Activated CD4-positive, alpha-beta T cell treated with anti-CD3 and anti-CD28 coated beads for 36 hours (primary cell): ENCODE measurements at regions of chr15 and their contacts with region 1.

Region 1: GRCh38 chr15:45340429-45340828 is 37.9 kb downstream of the GATM start:
- DNase-seq: no peak
- ATAC-seq: no peak
- H3K4me3 Mint-ChIP-seq: no peak overlapping the region
- H3K27ac Mint-ChIP-seq: no peak overlapping the region
- H3K4me1 Mint-ChIP-seq: peaks cover 4% of the 10 kb centered on the region
- H3K27me3 Mint-ChIP-seq: no peaks in the 10 kb centered on the region

Region 2: DNA sequence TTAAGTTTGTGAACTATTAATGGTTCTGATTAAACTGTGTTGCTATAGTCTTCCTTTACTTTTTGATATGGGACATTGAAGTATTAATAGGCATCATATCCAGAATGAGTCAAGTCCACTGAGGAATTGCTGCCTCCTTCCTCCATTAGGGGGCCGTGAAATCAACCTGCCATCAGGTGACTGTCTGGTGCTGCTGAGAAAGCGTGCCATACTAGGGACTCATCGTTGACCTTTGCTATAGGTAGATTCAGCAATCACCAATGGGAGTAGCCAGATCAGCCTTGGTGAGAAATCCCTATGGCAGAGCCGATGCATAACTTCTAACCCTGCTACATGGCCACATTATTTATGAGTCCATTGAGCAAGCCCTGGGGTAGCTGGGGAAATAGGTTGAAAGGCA is 118.5 kb before region 1 on chr15:
- CTCF ChIA-PET with region 1: no interaction called
- POLR2A ChIA-PET with region 1: interaction called, 11 read pairs
- intact Hi-C with region 1: no loop called
- DNase-seq: no peak
- ATAC-seq: no peak
- H3K4me3 Mint-ChIP-seq: no peak overlapping the region
- H3K27ac Mint-ChIP-seq: no peak overlapping the region
- H3K4me1 Mint-ChIP-seq: no peaks in the 10 kb centered on the region
- H3K27me3 Mint-ChIP-seq: peaks cover 6% of the 10 kb centered on the region